ENCODE measurements at regions of chr16 and their contacts with region 1.

Region 1: GRCh38 chr16:57300387-57301125 is 16.1 kb upstream of the PLLP start:
- DNase-seq: peak; percentile 99
- H3K4me3 ChIP-seq: peak overlapping the region; percentile 30
- H3K27ac ChIP-seq: peak overlapping the region; percentile 92
- H3K4me1 ChIP-seq: peaks cover 10% of the 10 kb centered on the region
- H3K27me3 ChIP-seq: no peaks in the 10 kb centered on the region
- CTCF ChIP-seq: peak; percentile 84

Region 2: GRCh38 chr16:57091975-57092785 is 208.4 kb before region 1 on chr16 and contains the start of gene CPNE2:
- intact Hi-C with region 1: loop called (anchors 5 kb)
- DNase-seq: peak; percentile 66
- H3K4me3 ChIP-seq: peak within 1 kb of the TSS; percentile 86
- H3K27ac ChIP-seq: peak within 1 kb of the TSS; percentile 70
- H3K4me1 ChIP-seq: no peaks in the 10 kb centered on the region
- H3K27me3 ChIP-seq: no peaks in the 10 kb centered on the region
- CTCF ChIP-seq: no peak
- total RNA-seq, gene CPNE2: 38.6 to 53.3 TPM

Region 3: GRCh38 chr16:57422026-57422944 is 121.7 kb after region 1 on chr16:
- intact Hi-C with region 1: loop called (anchors 1 kb)
- DNase-seq: peak; percentile 59
- H3K4me3 ChIP-seq: no peak overlapping the region
- H3K27ac ChIP-seq: no peak overlapping the region
- H3K4me1 ChIP-seq: no peaks in the 10 kb centered on the region
- H3K27me3 ChIP-seq: no peaks in the 10 kb centered on the region
- CTCF ChIP-seq: peak; percentile 48

Measured in colonic mucosa (tissue), 4 donors.